CD8-positive, alpha-beta T cell (primary cell): ENCODE measurements at regions of chr14 and their contacts with region 1.

Region 1: GRCh38 chr14:55339770-55340169 is 68.5 kb downstream of the FBXO34 start:
- DNase-seq: peak in 2 of 9 experiments; percentile 19 to 26
- ATAC-seq: no peak
- H3K4me3 ChIP-seq: no peak overlapping the region
- H3K4me3 Mint-ChIP-seq: no peak overlapping the region
- H3K27ac ChIP-seq: no peak overlapping the region
- H3K27ac Mint-ChIP-seq: peak overlapping the region; percentile 24
- H3K4me1 ChIP-seq: peaks cover 35% of the 10 kb centered on the region
- H3K4me1 Mint-ChIP-seq: peaks cover 64% of the 10 kb centered on the region
- H3K27me3 ChIP-seq: no peaks in the 10 kb centered on the region
- H3K27me3 Mint-ChIP-seq: no peaks in the 10 kb centered on the region
- CTCF ChIP-seq: no peak

Region 2: GRCh38 chr14:55323910-55324309 is 15.9 kb before region 1 on chr14:
- CTCF ChIA-PET with region 1: interaction called, 3 read pairs
- POLR2A ChIA-PET with region 1: no interaction called
- intact Hi-C with region 1: loop called in 1 of 2 experiments (anchors 2 kb)
- DNase-seq: peak in 2 of 9 experiments; percentile 28 to 33
- ATAC-seq: no peak
- H3K4me3 ChIP-seq: no peak overlapping the region
- H3K4me3 Mint-ChIP-seq: no peak overlapping the region
- H3K27ac ChIP-seq: no peak overlapping the region
- H3K27ac Mint-ChIP-seq: no peak overlapping the region
- H3K4me1 ChIP-seq: no peaks in the 10 kb centered on the region
- H3K4me1 Mint-ChIP-seq: peaks cover 31% of the 10 kb centered on the region
- H3K27me3 ChIP-seq: no peaks in the 10 kb centered on the region
- H3K27me3 Mint-ChIP-seq: no peaks in the 10 kb centered on the region
- CTCF ChIP-seq: no peak

Region 3: GRCh38 chr14:55361190-55361589 is 21.4 kb after region 1 on chr14:
- CTCF ChIA-PET with region 1: no interaction called
- POLR2A ChIA-PET with region 1: no interaction called
- intact Hi-C with region 1: no loop called
- DNase-seq: no peak
- ATAC-seq: no peak
- H3K4me3 ChIP-seq: no peak overlapping the region
- H3K4me3 Mint-ChIP-seq: no peak overlapping the region
- H3K27ac ChIP-seq: no peak overlapping the region
- H3K27ac Mint-ChIP-seq: no peak overlapping the region
- H3K4me1 ChIP-seq: no peaks in the 10 kb centered on the region
- H3K4me1 Mint-ChIP-seq: no peaks in the 10 kb centered on the region
- H3K27me3 ChIP-seq: no peaks in the 10 kb centered on the region
- H3K27me3 Mint-ChIP-seq: no peaks in the 10 kb centered on the region
- CTCF ChIP-seq: no peak